Head of caudate nucleus (tissue), 42 donors: ENCODE measurements at regions of chr9 and their contacts with region 1.

Region 1: GRCh38 chr9:71249729-71250317 is 128.4 kb upstream of the TRPM3 start:
- DNase-seq: peak in 20 of 42 donors; percentile 5 to 73 (median 32)

Region 2: DNA sequence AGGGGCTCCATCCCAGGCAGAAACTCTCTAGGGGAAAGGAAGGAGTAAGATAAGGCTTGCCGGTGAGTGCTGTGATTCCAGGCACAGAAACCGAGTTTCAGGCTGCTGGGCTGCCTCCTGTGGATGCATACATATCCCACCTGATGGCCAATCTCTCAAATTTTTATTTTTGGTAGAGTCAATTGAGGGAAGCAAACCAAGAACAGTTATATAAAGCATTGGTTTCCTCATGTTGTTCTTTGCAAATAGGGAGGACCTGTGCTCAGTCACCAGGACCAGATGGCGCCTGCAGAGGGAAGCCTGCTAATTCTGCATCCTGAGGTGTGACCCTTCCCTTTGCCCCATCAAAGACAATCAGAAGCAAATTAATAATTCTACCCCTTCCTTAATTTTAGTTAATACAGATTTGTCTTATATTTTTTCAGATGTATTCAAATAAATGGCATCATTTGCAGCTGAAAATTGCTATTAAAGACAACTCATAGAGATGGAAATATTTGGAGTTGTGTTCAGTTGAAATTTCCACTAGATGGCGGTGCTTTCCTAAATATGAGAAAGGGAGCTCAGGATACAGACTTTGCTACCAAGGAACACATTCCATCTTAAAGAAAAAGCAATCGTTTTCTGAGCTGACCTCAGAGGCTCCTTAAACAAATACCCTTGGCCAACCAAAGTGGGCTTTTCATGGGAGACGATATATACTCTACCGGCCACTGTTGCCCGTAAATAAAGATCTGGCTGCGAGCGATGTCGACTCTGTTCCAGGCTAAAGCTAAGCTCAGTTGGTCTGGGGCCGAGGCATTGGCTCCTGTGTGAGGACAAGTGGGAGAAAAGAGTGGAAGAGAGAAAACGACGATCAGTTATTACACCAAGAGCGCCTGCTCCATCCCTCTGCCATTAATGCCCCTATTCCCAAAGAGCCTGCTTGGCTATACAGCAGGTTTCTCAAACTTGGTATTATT is 609.7 kb before region 1 on chr9:
- intact Hi-C with region 1: loop called (anchors 5 kb)
- DNase-seq: peak in 10 of 42 donors; percentile 26 to 71 (median 47)

Region 3: DNA sequence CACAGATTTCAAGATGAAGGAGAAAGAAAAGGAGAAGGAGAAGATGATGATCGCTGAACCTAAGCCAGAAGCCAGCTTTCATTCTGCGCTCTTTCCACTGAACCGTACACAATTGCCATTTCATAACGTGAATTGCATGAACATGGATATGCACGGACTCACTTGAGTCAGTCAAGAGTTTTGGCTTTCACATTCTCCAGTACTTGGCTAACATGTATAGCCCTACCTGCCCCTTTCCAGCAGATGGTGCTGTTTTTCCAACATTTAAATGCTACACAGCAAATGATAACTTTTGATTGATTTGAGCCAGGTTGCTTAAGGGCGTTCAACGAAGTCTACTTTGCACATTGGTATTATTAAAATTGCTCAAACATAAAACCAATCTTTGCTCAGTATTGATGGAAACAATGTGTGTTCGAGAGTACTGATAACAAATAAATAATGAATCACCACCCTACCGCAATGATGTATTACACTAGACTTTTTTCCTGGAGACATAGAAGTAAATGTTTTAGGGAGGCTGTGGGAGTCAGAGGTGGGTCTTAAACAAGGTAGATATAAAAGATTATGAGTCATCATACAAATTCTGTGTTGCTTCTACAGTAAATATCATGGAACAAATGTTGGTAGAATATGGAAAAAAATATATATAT is 324.8 kb before region 1 on chr9:
- intact Hi-C with region 1: loop called (anchors 10 kb)
- DNase-seq: peak in 29 of 42 donors; percentile 4 to 74 (median 41)